A673 (cell line): ENCODE measurements at regions of chr16 and their contacts with region 1.

Region 1: DNA sequence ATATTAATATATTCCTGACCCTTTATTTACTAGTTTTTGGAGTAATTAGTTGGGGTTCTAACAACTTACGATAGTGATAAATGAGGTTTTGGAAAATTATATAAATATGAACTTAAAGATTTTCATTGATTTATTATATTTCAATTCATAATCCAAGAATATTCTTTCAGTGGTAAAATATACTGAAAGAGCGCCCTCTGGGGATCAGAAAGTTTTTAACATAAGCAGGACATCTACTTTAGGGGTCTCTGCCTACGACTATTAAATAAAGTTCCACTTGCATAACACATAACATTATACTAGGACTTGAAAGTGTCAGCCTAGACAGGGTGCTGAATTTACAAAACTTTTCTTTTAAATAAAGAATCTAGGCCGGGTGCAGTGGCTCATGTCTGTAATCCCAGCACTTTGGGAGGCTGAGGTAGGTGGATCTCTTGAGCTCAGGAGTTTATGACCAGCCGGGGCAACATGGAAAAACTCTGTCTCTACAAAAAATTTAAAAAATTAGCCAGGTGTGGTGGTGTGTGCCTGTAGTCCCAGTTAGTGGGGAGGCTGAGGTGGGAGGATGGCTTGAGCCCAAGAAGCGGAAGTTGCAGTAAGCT is 15.6 kb downstream of the RFWD3 start:
- DNase-seq: peak; percentile 40
- H3K4me3 ChIP-seq: no peak overlapping the region
- H3K27ac ChIP-seq: peak overlapping the region; percentile 64
- H3K4me1 ChIP-seq: peaks cover 35% of the 10 kb centered on the region
- H3K27me3 ChIP-seq: no peaks in the 10 kb centered on the region
- CTCF ChIP-seq: peak; percentile 76

Region 2: DNA sequence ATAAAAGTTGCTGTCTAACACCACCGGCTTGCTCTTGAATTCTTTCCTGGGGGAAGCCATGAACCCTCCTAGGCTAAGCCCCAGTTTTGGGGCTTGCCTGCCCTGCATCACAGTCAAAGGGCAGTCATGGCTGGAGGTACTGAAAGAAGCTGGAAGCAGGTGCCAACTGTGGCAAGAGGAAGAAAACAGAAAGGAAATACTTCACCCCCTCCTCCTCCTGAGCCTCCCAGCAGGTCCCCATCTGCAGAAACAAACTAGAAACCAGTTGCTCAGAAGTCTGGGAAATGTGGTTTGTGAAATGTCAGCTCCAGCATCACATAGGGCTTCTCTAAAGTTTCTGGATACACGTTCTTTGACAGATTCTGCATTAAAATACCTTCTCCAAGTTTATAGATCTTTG is 504.4 kb before region 1 on chr16:
- CTCF ChIA-PET with region 1: no interaction called
- POLR2A ChIA-PET with region 1: no interaction called
- intact Hi-C with region 1: no loop called
- DNase-seq: no peak
- H3K4me3 ChIP-seq: no peak overlapping the region
- H3K27ac ChIP-seq: no peak overlapping the region
- H3K4me1 ChIP-seq: no peaks in the 10 kb centered on the region
- H3K27me3 ChIP-seq: peaks cover 13% of the 10 kb centered on the region
- CTCF ChIP-seq: no peak

Region 3: DNA sequence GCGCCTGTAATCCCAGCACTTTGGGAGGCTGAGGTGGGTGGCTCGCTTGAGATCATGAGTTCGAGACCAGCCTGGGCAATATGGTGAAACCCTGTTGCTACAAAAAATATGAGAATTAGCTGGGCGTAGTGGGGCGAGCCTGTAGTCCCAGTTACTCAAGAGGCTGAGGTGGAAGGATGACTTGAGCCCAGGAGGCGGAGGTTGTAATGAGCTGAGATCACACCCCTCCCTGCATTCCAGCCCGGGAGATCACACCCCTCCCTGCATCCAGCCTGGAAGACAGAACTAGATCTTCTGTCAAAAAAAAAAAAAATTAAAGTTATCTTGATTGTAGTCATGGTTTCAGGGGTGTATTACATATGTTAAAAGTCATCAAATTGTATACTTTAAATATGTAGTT is 17.4 kb before region 1 on chr16:
- CTCF ChIA-PET with region 1: interaction called, 12 read pairs
- POLR2A ChIA-PET with region 1: no interaction called
- intact Hi-C with region 1: no loop called
- DNase-seq: no peak
- H3K4me3 ChIP-seq: no peak overlapping the region
- H3K27ac ChIP-seq: no peak overlapping the region
- H3K4me1 ChIP-seq: no peaks in the 10 kb centered on the region
- H3K27me3 ChIP-seq: no peaks in the 10 kb centered on the region
- CTCF ChIP-seq: no peak